CD8-positive, alpha-beta T cell (primary cell): ENCODE measurements at regions of chr21 and their contacts with region 1.

Region 1: GRCh38 chr21:34243562-34243961 is 120.2 kb upstream of the KCNE2 start:
- DNase-seq: peak in 2 of 9 experiments; percentile 24 to 47
- ATAC-seq: no peak
- H3K4me3 ChIP-seq: no peak overlapping the region
- H3K4me3 Mint-ChIP-seq: no peak overlapping the region
- H3K27ac ChIP-seq: no peak overlapping the region
- H3K27ac Mint-ChIP-seq: no peak overlapping the region
- H3K4me1 ChIP-seq: no peaks in the 10 kb centered on the region
- H3K4me1 Mint-ChIP-seq: no peaks in the 10 kb centered on the region
- H3K27me3 ChIP-seq: no peaks in the 10 kb centered on the region
- H3K27me3 Mint-ChIP-seq: peaks cover 3% of the 10 kb centered on the region
- CTCF ChIP-seq: no peak

Region 2: GRCh38 chr21:34845521-34846451 is 602.2 kb after region 1 on chr21:
- CTCF ChIA-PET with region 1: no interaction called
- POLR2A ChIA-PET with region 1: no interaction called
- intact Hi-C with region 1: loop called in 1 of 2 experiments (anchors 5 kb)
- DNase-seq: peak in 2 of 9 experiments; percentile 56 to 64
- ATAC-seq: no peak
- H3K4me3 ChIP-seq: no peak overlapping the region
- H3K4me3 Mint-ChIP-seq: peak overlapping the region; percentile 30
- H3K27ac ChIP-seq: no peak overlapping the region
- H3K27ac Mint-ChIP-seq: peak overlapping the region; percentile 50
- H3K4me1 ChIP-seq: peaks cover 12% of the 10 kb centered on the region
- H3K4me1 Mint-ChIP-seq: peaks cover 36% of the 10 kb centered on the region
- H3K27me3 ChIP-seq: no peaks in the 10 kb centered on the region
- H3K27me3 Mint-ChIP-seq: no peaks in the 10 kb centered on the region
- CTCF ChIP-seq: no peak